ENCODE measurements at regions of chrX and their contacts with region 1.

Region 1: DNA sequence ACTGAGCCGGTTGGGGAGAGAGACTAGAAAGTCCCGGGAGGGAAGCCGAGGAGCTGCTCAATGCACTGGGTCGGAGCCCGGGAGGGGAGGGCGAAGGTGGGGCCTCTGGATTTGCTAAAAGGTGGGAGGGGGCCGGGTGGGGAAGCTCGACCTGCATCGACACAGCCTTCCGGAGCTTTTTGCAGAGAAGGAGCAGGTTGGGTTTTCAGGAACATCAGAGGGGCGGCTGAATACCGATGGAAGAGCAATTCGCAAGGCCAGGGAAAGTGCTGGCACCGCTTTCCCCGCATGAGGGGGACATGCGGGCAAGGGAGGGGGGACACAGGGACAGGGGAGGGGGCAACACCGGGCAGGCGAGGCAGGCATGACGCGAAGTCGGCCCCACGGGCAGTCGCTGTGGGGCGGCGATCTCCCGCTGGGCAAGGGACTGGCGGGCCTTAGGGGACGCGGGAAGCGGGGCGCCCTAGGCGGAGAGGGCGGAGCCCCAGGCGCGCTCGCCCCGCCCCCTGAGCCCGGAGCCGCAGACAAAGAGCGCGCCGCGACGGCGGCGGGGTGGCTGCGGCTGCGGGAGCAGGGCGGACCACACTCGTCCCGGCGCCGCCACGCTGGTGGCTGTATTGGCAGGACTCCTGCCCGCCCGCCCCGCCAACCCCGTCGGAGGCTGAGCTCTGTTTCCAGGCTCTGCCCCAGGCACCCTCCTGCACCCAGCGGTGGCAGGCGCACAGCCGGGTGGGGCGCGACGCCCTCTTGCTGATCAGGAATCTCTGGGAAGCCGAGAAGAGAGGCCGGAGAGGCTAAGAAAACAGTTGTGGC is 11.6 kb downstream of the PDZD4 start:
- DNase-seq: no peak
- H3K4me3 ChIP-seq: peak overlapping the region; percentile 12 to 64 (median 48)
- H3K27ac ChIP-seq: peak overlapping the region in 1 of 59 donors; percentile 26
- H3K27me3 ChIP-seq: peaks cover 0 to 82% (median 19%) of the 10 kb centered on the region in 45 donors
- CTCF ChIP-seq: no peak

Region 2: GRCh38 chrX:153862369-153863250 is 43.8 kb after region 1 on chrX:
- intact Hi-C with region 1: loop called in 1 of 2 experiments (anchors 10 kb)
- DNase-seq: peak in 2 of 10 donors; percentile 10 to 51
- H3K4me3 ChIP-seq: no peak overlapping the region
- H3K27ac ChIP-seq: peak overlapping the region in 7 of 59 donors; percentile 14 to 81 (median 27)
- H3K27me3 ChIP-seq: peaks cover 0 to 76% (median 19%) of the 10 kb centered on the region in 45 donors
- CTCF ChIP-seq: no peak